Right ventricle myocardium inferior (tissue), 1 donor: ENCODE measurements at regions of chr7 and their contacts with region 1.

Region 1: GRCh38 chr7:71131256-71132126 is 453 bp upstream of the GALNT17 start:
- DNase-seq: peak; percentile 75
- ATAC-seq: peak; percentile 85

Region 2: DNA sequence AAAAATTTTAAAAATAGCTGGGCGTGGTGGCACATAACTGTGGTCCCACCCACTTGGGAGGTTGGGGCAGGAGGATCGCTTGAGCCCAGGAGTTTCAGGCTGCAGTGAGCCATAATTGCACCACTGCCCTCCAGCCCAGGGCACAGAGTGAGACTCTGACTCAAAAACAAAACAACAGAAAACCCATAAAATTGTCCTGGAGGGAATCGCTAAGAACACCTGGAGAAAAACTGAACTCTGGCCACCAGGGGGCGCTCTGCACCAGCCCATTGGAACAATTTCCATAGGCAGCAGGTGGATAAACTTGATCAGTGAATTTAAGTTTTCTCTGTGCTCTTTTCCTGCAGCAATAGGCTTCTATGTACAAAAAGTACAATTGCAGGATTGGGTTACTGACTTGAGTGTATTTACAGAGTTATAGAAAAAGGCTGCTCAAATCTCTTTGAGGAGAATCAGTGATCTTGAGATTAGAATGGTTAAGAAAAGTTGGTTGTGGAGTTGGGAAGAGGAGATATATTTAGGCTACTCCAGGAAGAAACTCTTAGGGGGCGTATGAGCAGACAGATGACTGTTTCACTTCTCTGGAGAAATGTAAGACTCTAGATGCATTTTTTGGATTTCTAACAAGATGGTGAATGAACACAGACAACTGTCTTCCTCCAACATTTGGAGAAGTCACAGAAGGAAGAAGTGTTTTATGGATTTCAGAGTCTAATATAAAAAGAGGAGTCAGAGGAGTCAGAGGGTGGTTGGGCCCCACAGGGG is 274.4 kb before region 1 on chr7:
- intact Hi-C with region 1: loop called (anchors 5 kb)
- DNase-seq: no peak
- ATAC-seq: no peak

Region 3: GRCh38 chr7:71220210-71220695 is 88.8 kb after region 1 on chr7:
- intact Hi-C with region 1: loop called (anchors 5 kb)
- DNase-seq: no peak
- ATAC-seq: peak; percentile 93

Region 4: GRCh38 chr7:71237945-71238344 is 106.5 kb after region 1 on chr7:
- intact Hi-C with region 1: loop called (anchors 2 kb)
- DNase-seq: no peak
- ATAC-seq: peak; percentile 90

Region 5: GRCh38 chr7:71389976-71390375 is 258.5 kb after region 1 on chr7:
- intact Hi-C with region 1: no loop called
- DNase-seq: no peak
- ATAC-seq: no peak

Region 6: DNA sequence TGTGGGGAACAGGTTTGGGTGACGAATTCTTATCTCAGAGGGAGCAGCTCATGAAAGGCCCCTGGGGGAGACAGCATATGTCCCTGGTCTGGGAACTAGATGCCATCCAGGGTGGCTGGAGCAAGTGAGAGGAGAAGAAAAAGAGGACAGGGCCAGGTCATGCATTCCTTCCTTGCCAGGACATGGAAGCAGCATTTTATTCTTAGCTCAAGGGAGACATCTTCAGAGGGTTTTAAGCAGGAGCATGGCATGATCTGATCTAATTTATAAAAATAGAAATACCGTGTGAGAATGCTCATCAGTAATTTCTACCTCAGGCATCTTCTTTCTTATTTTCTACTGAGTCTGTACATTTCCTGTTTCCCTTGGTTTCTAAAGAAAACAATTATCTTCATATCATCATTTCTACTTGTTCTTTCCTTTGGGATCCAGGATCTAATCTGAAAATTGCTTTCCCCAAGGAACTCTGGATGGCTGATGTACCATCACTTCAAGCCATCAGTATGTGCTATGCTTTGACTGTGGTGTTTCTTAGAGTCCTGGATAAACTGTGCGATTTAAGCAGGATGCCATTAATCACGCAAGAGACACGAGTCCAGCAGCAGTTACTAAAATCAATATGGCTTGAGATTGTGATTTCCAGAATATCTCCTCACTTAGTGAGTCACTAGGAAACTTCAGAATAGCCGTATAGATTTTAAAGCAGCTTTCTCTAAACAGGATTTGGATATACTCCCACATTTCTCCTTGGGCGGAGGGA is 386.6 kb after region 1 on chr7:
- intact Hi-C with region 1: loop called (anchors 5 kb)
- DNase-seq: no peak
- ATAC-seq: no peak

Region 7: DNA sequence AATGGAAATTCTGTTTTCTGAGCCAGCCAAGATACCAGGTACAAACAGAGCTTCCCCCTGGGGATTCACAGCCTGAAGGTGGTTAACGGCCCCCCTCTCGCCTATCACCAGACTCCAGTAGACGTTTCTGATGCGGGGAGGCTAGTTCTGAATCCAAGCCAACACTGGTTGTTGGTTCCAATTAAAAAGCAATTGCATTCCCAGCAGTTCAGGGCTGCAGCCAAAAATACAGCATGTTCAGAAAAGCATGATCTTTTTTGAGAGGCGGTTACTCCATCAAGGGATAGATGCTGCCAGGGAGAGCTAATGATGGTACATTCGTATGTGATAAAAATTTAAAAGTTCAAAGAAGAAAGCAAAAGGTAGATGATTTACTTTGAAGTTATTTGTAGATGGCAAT is 481.4 kb after region 1 on chr7:
- intact Hi-C with region 1: loop called (anchors 10 kb)
- DNase-seq: no peak
- ATAC-seq: peak; percentile 58